WTC11 (cell line): ENCODE measurements at regions of chr14 and their contacts with region 1.

Region 1: DNA sequence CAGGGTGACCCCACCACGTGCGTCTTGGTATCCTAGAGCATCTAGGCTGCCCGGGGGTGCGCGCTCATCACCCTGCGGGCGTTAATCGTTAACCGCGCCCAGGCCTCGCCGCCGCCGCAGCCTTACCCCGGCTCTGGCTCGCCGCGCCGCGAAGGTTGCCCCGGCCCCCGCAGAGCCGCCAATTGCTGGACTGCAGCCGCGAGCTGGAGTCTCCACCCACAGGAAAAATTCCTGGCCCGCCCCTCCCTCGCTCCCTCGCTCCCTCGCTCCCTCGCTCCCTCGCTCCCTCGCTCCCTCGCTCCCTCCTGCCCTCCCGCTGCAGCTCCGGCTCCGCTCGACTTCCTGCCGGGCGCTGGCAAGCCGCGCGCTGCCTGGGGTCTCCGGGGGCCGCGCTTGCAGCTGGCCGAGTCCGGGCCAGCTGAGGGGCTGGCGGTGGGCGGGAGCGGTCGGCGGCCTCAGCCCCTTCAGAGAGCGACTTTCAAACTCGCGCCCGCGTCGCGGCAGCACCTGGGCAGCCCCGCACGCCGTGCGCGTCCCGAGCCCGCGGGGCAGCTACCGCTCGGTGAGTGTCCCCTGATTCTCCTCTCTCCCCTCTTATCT is at the start of gene PLEKHG3:
- DNase-seq: peak; percentile 89
- ATAC-seq: peak; percentile 15
- H3K4me3 Mint-ChIP-seq: peak within 1 kb of the TSS; percentile 84
- H3K27ac Mint-ChIP-seq: peak within 1 kb of the TSS; percentile 97
- H3K4me1 Mint-ChIP-seq: peaks cover 76% of the 10 kb centered on the region
- H3K27me3 Mint-ChIP-seq: no peaks in the 10 kb centered on the region
- CTCF ChIP-seq: no peak
- total RNA-seq, gene PLEKHG3: 70.6 to 75.3 TPM (median 71.8 TPM) in 3 replicates

Region 2: GRCh38 chr14:64573109-64573508 is 131.1 kb before region 1 on chr14:
- CTCF ChIA-PET with region 1: no interaction called
- POLR2A ChIA-PET with region 1: interaction called, 10 read pairs
- DNase-seq: no peak
- ATAC-seq: peak; percentile 81
- H3K4me3 Mint-ChIP-seq: peak overlapping the region; percentile 31; the same call in 1 of the 2 replicates
- H3K27ac Mint-ChIP-seq: peak overlapping the region; percentile 98
- H3K4me1 Mint-ChIP-seq: peaks cover 24% of the 10 kb centered on the region
- H3K27me3 Mint-ChIP-seq: no peaks in the 10 kb centered on the region
- CTCF ChIP-seq: no peak

Region 3: GRCh38 chr14:64715628-64716412 is 11.6 kb after region 1 on chr14:
- CTCF ChIA-PET with region 1: interaction called, 40 read pairs
- POLR2A ChIA-PET with region 1: interaction called, 52 read pairs
- DNase-seq: peak; percentile 66
- ATAC-seq: peak; percentile 70
- H3K4me3 Mint-ChIP-seq: peak overlapping the region; percentile 72
- H3K27ac Mint-ChIP-seq: peak overlapping the region; percentile 78
- H3K4me1 Mint-ChIP-seq: peaks cover 71% of the 10 kb centered on the region
- H3K27me3 Mint-ChIP-seq: peaks cover 24% of the 10 kb centered on the region
- CTCF ChIP-seq: no peak